ENCODE measurements at regions of chr1 and their contacts with region 1.

Region 1: GRCh38 chr1:76568573-76569238 is 298.6 kb upstream of the ST6GALNAC5 start:
- DNase-seq: no peak
- ATAC-seq: no peak
- H3K4me3 ChIP-seq: no peak overlapping the region
- H3K27ac ChIP-seq: no peak overlapping the region
- H3K4me1 ChIP-seq: no peaks in the 10 kb centered on the region
- H3K27me3 ChIP-seq: no peaks in the 10 kb centered on the region
- CTCF ChIP-seq: no peak

Region 2: GRCh38 chr1:76381450-76382097 is 187.1 kb before region 1 on chr1:
- CTCF ChIA-PET with region 1: no interaction called
- POLR2A ChIA-PET with region 1: no interaction called
- in situ Hi-C with region 1: no loop called
- intact Hi-C with region 1: no loop called
- DNase-seq: no peak
- ATAC-seq: no peak
- H3K4me3 ChIP-seq: no peak overlapping the region
- H3K27ac ChIP-seq: no peak overlapping the region
- H3K4me1 ChIP-seq: no peaks in the 10 kb centered on the region
- H3K27me3 ChIP-seq: no peaks in the 10 kb centered on the region
- CTCF ChIP-seq: no peak

Region 3: GRCh38 chr1:76547916-76548315 is 20.8 kb before region 1 on chr1:
- CTCF ChIA-PET with region 1: no interaction called
- POLR2A ChIA-PET with region 1: no interaction called
- in situ Hi-C with region 1: no loop called
- intact Hi-C with region 1: loop called (anchors 2 kb)
- DNase-seq: no peak
- ATAC-seq: no peak
- H3K4me3 ChIP-seq: no peak overlapping the region
- H3K27ac ChIP-seq: no peak overlapping the region
- H3K4me1 ChIP-seq: no peaks in the 10 kb centered on the region
- H3K27me3 ChIP-seq: no peaks in the 10 kb centered on the region
- CTCF ChIP-seq: no peak

Region 4: GRCh38 chr1:76746206-76746605 is 177.5 kb after region 1 on chr1:
- CTCF ChIA-PET with region 1: no interaction called
- POLR2A ChIA-PET with region 1: no interaction called
- in situ Hi-C with region 1: no loop called
- intact Hi-C with region 1: no loop called
- DNase-seq: no peak
- ATAC-seq: no peak
- H3K4me3 ChIP-seq: no peak overlapping the region
- H3K27ac ChIP-seq: no peak overlapping the region
- H3K4me1 ChIP-seq: no peaks in the 10 kb centered on the region
- H3K27me3 ChIP-seq: no peaks in the 10 kb centered on the region
- CTCF ChIP-seq: no peak